ENCODE measurements at regions of chr3 and their contacts with region 1.

Region 1: DNA sequence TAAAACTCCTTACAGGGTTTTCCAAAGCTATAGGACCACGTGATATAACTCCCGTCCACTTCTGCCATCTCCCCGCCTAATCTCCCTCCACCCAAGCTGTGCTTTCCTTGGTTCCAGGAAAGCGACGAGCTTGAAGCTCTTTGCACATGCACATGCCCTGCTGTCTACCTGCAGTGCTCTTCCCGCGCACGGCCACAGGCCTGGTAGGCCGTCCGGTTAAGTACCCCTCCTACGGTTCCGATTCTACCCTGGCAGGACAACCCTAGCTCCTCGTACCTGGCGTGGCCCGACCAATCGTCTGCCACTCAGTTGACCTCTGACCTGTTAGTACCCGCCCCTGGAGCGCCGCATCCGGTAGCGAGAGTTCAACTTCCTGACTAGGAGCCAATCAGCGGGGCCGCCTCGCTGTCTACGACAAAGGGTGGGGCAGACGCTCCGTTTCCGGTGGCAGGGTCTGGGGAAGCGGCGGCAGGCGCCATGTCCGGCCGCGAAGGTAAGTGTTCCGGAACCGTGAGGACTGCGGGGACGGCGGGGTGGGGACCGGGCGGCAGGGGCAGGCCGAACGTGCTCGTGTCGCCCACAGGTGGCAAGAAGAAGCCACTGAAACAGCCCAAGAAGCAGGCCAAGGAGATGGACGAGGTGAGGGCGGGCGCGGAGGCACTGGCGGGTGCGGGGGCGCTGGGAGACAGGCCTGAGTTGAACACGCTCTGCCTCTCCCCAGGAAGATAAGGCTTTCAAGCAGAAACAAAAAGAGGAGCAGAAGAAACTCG is at the starts of genes CCDC51 and TMA7:
- DNase-seq: peak; percentile 98
- ATAC-seq: peak; percentile 97 to 99 (median 99)
- H3K4me3 ChIP-seq: peak within 1 kb of the TSS; percentile 71 to 99 (median 88)
- H3K27ac ChIP-seq: peak within 1 kb of the TSS; percentile 68 to 98 (median 96)
- H3K4me1 ChIP-seq: peaks cover 0 to 36% (median 27%) of the 10 kb centered on the region in 9 donors
- H3K27me3 ChIP-seq: no peaks in the 10 kb centered on the region
- CTCF ChIP-seq: no peak
- total RNA-seq, gene CCDC51: 9.5 to 14.3 (median 12.2) TPM
- total RNA-seq, gene TMA7: 140 to 227 (median 193) TPM

Region 2: GRCh38 chr3:48194446-48195071 is 245.4 kb before region 1 on chr3:
- intact Hi-C with region 1: loop called in 1 of 10 experiments (anchors 10 kb)
- DNase-seq: peak; percentile 32 to 42
- ATAC-seq: peak in 5 of 8 donors; percentile 36 to 66 (median 57)
- H3K4me3 ChIP-seq: no peak overlapping the region
- H3K27ac ChIP-seq: no peak overlapping the region
- H3K4me1 ChIP-seq: no peaks in the 10 kb centered on the region
- H3K27me3 ChIP-seq: no peaks in the 10 kb centered on the region
- CTCF ChIP-seq: peak; percentile 33 to 74 (median 64)

Region 3: DNA sequence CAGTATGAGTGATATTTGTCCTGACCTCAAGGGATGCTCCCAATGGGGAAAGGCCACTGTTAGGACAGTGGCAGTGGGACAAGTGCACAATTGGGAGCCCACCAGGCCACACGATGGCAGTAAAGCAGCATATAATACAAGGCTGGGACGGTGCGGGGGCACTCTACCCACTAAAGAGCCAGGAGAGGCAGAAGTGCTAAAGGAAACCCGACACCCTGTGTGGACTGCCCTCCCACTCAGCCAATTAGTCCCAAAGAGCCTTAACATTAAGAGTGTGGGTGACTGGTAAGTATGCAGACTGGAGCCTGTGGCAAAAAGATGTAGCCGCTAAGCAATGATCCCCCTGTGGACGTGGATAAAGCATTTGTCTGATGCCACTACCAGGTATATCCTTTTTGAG is 207.3 kb before region 1 on chr3:
- intact Hi-C with region 1: loop called in 2 of 10 experiments (anchors 1 to 5 kb)
- DNase-seq: peak; percentile 64 to 67
- ATAC-seq: peak; percentile 79 to 93 (median 92)
- H3K4me3 ChIP-seq: peak overlapping the region in 3 of 10 donors; percentile 8 to 16 (median 13)
- H3K27ac ChIP-seq: peak overlapping the region in 1 of 10 donors; percentile 12
- H3K4me1 ChIP-seq: peaks cover 0 to 18% (median 10%) of the 10 kb centered on the region in 9 donors
- H3K27me3 ChIP-seq: no peaks in the 10 kb centered on the region
- CTCF ChIP-seq: peak; percentile 18 to 73 (median 60)

Region 4: GRCh38 chr3:48656061-48656840 is 216.2 kb after region 1 on chr3:
- intact Hi-C with region 1: no loop called
- DNase-seq: peak; percentile 78 to 85
- ATAC-seq: peak; percentile 87 to 93 (median 91)
- H3K4me3 ChIP-seq: peak overlapping the region; percentile 43 to 76 (median 64)
- H3K27ac ChIP-seq: peak overlapping the region in 9 of 10 donors; percentile 36 to 74 (median 65)
- H3K4me1 ChIP-seq: peaks cover under 1 to 23% (median 13%) of the 10 kb centered on the region in 9 donors
- H3K27me3 ChIP-seq: peaks cover 0 to 13% (median 4%) of the 10 kb centered on the region in 7 donors
- CTCF ChIP-seq: peak; percentile 24 to 78 (median 65)

Measured in heart right ventricle (tissue), 16 donors.